ENCODE measurements at regions of chr3 and their contacts with region 1.

Region 1: DNA sequence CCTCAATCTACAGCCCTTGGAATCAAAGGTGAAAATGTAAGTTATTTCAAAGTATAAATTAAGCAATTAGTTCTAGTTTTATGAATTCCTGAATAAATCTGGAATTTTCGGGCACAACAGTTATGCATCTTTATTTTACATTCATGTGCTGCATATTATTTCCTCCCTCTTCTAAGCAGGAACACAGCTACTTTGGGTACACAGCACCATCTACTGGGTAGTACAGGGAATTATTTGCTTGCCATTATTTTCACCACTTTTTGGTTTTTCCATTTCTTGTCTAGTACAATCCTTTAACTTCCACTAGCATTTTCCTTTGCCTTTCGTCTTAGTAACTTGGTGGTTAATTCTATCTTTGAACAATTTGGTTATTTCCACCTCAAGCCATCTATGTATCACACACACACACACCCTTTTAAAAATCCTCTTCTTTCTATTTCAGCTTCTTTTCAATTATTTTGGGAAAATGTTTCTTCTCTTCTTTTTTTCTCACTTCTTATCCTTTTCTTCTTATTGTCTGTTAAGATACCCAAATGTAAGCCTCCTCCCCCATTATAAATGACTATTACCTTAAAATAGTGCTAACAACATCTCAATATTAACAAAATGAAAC is 451.0 kb downstream of the MFSD1 start:
- DNase-seq: no peak
- ATAC-seq: peak; percentile 47
- H3K4me3 ChIP-seq: no peak overlapping the region
- H3K27ac ChIP-seq: no peak overlapping the region
- H3K4me1 ChIP-seq: no peaks in the 10 kb centered on the region
- H3K27me3 ChIP-seq: no peaks in the 10 kb centered on the region
- CTCF ChIP-seq: peak in 1 of 2 donors; percentile 27

Region 2: DNA sequence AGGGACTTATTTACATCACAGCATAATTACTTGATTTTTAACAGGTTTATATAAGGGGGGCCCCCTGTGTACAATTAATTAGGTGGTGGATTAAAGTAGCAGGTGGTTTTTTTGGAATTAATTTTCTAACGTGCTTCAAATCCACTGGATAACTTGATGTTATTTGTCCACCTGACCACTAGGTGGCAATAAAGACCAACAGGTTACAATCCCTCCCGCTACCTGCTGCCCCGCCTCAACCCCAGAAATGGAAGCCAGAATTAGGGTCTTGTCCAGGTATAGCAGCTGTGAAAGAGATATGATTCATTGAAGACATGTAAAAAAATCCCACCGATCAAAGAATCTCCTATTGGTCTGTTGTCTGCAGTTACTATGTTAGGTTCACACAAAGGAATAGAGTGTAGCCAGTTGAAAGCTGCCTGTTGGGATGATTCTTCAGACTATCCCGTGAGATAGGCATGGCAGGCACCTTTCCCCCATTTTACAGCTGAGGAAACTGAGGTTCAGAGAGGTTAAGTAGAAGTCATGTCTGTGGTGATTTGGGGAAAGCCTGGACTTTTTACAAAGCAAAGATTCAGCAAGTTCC is 407.0 kb before region 1 on chr3:
- intact Hi-C with region 1: loop called in 1 of 2 experiments (anchors 10 kb)
- DNase-seq: peak in 1 of 4 donors; percentile 24
- ATAC-seq: peak; percentile 79
- H3K4me3 ChIP-seq: no peak overlapping the region
- H3K27ac ChIP-seq: no peak overlapping the region
- H3K4me1 ChIP-seq: no peaks in the 10 kb centered on the region
- H3K27me3 ChIP-seq: no peaks in the 10 kb centered on the region
- CTCF ChIP-seq: peak; percentile 41 to 62

Region 3: GRCh38 chr3:159532577-159532976 is 279.7 kb after region 1 on chr3:
- intact Hi-C with region 1: no loop called
- DNase-seq: no peak
- ATAC-seq: no peak
- H3K4me3 ChIP-seq: no peak overlapping the region
- H3K27ac ChIP-seq: no peak overlapping the region
- H3K4me1 ChIP-seq: no peaks in the 10 kb centered on the region
- H3K27me3 ChIP-seq: no peaks in the 10 kb centered on the region
- CTCF ChIP-seq: no peak

Measured in left lung (tissue), 14 donors.